GM13976 (cell line): ENCODE measurements at regions of chr12 and their contacts with region 1.

Region 1: DNA sequence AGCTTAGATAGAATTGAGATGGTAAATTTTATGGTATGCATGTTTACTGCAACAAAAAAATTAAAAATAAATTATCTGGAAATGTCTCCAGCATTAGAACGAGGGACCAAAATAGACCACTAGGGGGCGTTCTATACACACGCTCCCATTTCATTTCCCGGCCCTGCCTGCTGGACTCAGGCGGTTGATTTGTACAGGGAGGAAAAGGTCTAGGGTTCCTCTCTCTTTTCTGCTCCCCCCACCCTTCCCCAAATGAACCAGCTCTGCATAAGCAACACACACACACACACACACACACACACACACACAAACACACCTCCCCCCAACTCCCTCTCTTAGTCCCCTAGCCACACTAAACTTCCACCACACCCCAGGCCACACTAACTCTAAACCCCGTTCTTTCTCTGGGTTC is 7.8 kb upstream of the DTX1 start:
- DNase-seq: peak; percentile 75
- CTCF ChIP-seq: peak; percentile 70

Region 2: GRCh38 chr12:112798006-112798760 is 250.5 kb before region 1 on chr12:
- in situ Hi-C with region 1: no loop called
- DNase-seq: no peak
- CTCF ChIP-seq: no peak

Region 3: DNA sequence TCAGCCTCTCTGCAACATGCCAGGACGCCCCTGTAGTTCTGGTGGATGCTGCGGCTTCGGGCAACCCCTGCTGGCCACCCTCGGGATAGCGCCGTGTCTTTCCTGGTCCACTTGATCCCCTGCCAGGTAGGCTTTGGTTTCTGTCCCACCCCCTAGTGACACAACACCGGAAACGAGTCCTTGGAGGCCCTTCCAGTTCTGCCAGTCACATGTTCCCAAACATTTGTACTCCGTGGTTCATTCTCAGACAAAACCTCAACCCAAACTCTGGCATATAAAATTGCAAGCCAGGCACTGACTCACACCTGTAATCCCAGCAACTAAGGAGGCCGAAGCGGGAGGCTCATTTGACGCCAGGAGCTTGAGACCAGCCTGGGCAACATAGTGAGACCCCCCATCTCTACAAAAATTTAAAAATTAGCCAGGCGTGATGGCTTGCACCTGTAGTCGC is 49.7 kb after region 1 on chr12:
- in situ Hi-C with region 1: loop called (anchors 5 kb)
- DNase-seq: peak; percentile 85
- CTCF ChIP-seq: peak; percentile 91

Region 4: DNA sequence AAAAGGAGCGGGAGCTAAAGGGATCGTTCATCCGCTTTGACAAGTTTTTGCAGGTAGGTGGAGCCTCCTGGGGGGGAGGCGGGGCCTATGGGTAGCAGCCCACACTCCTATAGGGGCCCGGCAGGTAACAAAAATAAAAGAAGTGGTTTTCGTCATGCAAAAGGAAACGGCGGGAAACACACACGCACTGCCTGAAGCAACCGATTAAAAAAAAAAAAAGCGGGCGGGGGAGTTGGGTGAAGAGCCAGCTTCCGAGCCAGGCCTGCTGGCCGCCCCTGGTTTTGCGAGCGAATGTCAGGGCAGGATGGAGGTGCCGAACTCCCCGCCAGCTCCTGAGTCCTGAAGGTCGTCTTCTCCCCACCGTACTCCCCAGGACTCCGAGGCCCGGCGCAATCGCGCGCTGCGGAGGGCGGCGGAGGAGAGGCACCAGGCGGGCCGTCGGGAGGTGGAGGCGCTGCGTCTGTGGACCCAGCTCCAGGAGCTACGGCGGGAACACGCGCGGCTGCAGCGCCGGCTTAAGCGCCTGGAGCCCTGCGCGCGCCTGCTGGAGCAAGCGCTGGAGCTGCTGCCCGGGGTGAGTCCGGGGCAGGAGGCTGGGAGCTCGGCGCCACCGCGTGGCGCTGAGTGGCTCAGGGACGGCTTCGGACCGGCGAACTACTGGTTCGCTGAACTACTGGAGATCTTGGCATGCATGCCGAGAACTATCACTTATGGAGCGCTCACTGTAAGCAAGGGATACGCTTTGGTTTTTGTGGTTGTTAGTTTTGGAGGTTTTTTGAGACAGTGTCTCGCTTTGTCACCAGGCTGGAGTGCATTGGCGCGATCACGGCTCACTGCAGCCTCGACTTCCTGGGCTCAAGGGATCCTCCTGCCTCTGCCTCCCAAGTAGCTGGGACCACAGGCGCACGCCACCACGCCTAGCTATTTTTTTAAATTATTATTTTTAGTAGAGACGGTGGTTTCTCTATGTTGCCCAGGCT is 104.4 kb after region 1 on chr12:
- in situ Hi-C with region 1: loop called (anchors 10 kb)
- DNase-seq: peak; percentile 87
- CTCF ChIP-seq: peak; percentile 63

Region 5: DNA sequence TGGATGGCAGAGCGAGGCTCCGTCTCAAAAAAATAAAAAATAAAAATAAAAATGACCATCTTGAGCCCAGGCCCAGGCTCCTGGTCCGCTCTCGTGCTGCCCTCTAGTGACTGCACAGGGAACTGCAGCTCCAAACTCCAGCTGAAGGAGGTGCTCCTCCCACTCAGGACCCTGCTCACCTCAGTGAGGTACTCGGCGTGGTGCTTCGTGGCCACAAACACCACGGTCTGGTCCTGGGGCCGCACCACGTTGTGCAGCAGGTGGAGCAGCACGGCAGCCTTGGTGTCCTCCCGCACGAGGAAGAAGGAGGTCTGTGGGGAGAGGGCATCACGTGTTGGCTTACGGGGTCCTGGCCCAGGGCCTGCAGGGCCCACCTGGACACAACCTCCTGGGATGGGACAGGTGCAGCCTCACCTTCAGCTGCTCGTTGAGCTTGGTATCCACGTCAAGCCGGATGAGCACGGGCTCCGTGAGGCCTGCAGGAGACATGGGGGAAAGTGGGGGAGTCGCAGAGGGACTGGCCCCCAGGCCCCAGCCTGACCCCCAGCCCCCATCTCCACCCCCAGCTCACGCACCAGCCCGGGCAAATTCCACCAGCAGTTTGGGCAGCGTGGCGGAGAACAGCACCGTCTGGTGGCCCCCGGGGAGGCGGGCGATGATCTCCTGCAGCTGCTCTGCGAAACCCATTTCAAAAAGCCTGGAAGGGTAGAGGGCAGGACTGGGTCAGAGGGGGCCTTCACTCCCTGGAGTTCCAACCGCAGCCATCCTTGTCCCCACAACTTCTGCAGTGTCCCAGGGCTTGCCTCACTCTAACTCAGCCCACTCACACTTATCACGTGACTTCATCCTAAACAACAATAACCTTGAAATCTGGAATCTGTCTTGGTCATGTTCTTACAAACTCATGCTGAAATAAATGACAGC is 126.0 kb after region 1 on chr12:
- in situ Hi-C with region 1: loop called (anchors 10 kb)
- DNase-seq: peak; percentile 91
- CTCF ChIP-seq: peak; percentile 99